ENCODE measurements at regions of chr6 and their contacts with region 1.

Region 1: GRCh38 chr6:27753668-27754407 is 158.4 kb downstream of the OR2B2 start:
- DNase-seq: peak; percentile 65
- H3K4me3 Mint-ChIP-seq: peak overlapping the region; percentile 83
- H3K27ac Mint-ChIP-seq: peak overlapping the region; percentile 69
- H3K4me1 Mint-ChIP-seq: peaks cover 56% of the 10 kb centered on the region
- H3K27me3 Mint-ChIP-seq: peaks cover 2% of the 10 kb centered on the region

Region 2: GRCh38 chr6:26322645-26323482 is 1431.0 kb before region 1 on chr6:
- intact Hi-C with region 1: loop called (anchors 5 kb)
- DNase-seq: peak; percentile 63
- H3K4me3 Mint-ChIP-seq: peak overlapping the region; percentile 89
- H3K27ac Mint-ChIP-seq: peak overlapping the region; percentile 51
- H3K4me1 Mint-ChIP-seq: peaks cover 51% of the 10 kb centered on the region
- H3K27me3 Mint-ChIP-seq: peaks cover 14% of the 10 kb centered on the region

Region 3: DNA sequence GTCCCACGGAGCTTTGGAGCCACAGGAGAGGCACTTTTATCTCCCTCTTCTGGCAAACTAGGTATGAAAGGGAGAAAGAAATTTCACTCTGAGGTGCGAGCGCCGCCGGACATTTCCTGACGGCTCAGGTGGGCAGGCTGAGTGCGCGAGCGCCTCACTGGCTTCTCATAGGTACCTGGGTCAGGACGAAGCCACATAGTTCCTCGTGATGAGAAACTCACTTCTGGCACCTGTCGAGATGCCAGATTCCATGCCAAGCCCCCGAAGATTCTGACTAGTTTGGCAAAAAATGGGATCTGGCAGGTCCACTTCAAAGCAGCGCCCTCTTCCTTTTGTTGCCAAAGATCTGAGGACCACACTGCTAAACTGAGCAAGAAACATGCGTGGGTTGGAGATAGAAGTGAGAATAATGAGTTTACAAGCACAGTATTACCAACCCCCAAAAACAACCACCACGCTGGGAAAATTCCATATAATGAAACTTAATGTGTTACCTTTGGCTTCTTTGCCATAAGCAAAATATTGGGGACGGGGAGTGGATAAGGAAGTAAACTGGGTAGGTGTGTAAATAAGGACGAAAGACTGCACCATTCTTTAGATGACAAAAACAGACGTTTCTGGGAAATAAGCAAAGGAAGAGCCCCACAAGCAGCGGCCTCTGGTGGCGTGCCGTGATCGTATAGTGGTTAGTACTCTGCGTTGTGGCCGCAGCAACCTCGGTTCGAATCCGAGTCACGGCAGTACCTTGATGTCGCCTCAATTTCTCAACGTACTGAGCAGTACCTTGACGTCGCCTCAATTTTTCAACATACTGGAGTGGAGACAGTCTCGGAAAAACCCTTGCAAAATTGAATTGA is 596.2 kb before region 1 on chr6:
- intact Hi-C with region 1: loop called (anchors 1 kb)
- DNase-seq: peak; percentile 70
- H3K4me3 Mint-ChIP-seq: peak overlapping the region; percentile 77
- H3K27ac Mint-ChIP-seq: peak overlapping the region; percentile 80
- H3K4me1 Mint-ChIP-seq: peaks cover 47% of the 10 kb centered on the region
- H3K27me3 Mint-ChIP-seq: peaks cover 2% of the 10 kb centered on the region

Region 4: DNA sequence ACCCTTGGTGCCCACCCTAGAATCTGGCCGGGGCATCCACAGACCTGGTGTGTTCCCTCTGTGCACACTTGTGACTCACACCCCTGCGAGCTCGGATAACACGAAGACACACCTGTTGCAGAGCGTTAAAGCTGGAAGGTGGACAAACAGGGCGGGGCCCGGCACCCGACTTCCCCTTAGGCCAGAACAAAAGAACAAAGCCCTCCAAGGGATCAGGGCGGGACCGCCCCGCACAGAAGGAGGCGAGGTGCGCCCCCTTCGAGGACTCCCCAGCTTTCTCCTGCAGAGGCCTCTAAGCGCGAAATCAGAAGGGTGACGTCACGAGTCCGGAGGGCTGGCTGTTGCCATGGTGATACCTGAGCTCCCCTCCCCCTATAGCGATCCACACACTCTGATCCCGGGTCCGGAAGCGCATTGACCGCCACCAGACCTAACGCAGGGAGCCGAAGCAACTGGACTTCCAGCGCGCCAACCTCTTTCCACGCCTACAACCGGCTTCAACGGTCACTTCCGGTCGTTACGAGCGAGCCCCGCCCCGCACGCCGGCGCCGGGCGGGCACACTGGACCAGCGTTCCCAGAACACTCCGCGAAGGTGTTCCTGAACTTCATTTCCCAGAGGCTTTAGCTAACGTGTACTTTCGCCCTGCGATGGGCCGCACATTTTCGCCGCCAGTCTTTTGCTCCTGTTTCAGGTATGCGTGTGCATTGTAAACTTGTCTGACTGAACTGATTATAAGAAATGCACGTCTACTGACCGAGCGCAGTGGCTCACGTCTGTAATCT is 281.0 kb before region 1 on chr6 and contains the start of gene ZNF184:
- intact Hi-C with region 1: loop called (anchors 1 kb)
- DNase-seq: peak; percentile 85
- H3K4me3 Mint-ChIP-seq: peak within 1 kb of the TSS; percentile 89
- H3K27ac Mint-ChIP-seq: peak within 1 kb of the TSS; percentile 93
- H3K4me1 Mint-ChIP-seq: peaks cover 46% of the 10 kb centered on the region
- H3K27me3 Mint-ChIP-seq: no peaks in the 10 kb centered on the region
- total RNA-seq, gene ZNF184: 7.6 and 8.0 TPM in 2 replicates

Region 5: GRCh38 chr6:27528714-27529113 is 225.1 kb before region 1 on chr6:
- intact Hi-C with region 1: no loop called
- DNase-seq: no peak
- H3K4me3 Mint-ChIP-seq: no peak overlapping the region
- H3K27ac Mint-ChIP-seq: no peak overlapping the region
- H3K4me1 Mint-ChIP-seq: no peaks in the 10 kb centered on the region
- H3K27me3 Mint-ChIP-seq: peaks cover 14% of the 10 kb centered on the region

Region 6: GRCh38 chr6:27687154-27688013 is 66.5 kb before region 1 on chr6:
- intact Hi-C with region 1: loop called (anchors 1 kb)
- DNase-seq: peak; percentile 74
- H3K4me3 Mint-ChIP-seq: peak overlapping the region; percentile 88
- H3K27ac Mint-ChIP-seq: peak overlapping the region; percentile 91
- H3K4me1 Mint-ChIP-seq: peaks cover 26% of the 10 kb centered on the region
- H3K27me3 Mint-ChIP-seq: peaks cover 24% of the 10 kb centered on the region

Region 7: DNA sequence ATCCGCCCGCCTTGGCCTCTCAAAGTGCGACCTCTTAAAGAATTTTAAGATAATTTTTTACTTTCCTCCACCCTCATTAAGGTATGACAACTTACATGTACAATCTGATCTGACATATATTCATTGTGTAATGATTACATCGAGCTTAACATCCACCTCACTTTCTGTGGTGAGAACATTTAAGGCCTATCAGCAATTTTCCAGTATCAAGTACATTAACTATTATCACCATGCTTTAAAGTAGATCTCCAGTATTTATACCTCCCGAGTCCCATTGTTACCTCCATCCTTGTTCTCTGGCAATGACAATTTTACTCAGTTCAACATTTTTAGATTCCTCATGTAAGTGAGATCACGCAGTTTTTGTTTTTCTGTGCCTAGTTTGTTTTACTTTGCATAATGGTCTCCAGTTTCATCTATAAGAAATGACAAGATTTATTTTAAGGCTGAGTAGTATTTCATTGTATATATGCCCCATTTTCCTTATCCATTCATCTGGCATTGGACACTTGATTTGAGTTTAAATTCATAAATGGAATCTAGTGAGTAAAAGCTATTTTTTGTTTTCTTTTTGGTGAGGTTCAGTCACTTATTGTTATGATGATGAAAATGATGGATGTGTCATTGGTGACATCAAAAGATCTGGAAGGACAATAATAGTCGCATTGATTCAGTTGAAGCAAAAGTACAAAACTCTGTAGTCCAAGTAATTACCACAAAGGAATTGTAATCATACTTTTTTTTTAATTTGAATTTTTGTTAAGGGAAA is 71.4 kb after region 1 on chr6:
- intact Hi-C with region 1: no loop called
- DNase-seq: no peak
- H3K4me3 Mint-ChIP-seq: peak overlapping the region; percentile 89
- H3K27ac Mint-ChIP-seq: peak overlapping the region; percentile 96
- H3K4me1 Mint-ChIP-seq: peaks cover 46% of the 10 kb centered on the region
- H3K27me3 Mint-ChIP-seq: peaks cover 3% of the 10 kb centered on the region

Region 8: GRCh38 chr6:27838058-27838944 is 84.5 kb after region 1 on chr6:
- intact Hi-C with region 1: loop called (anchors 1 kb)
- DNase-seq: peak; percentile 83
- H3K4me3 Mint-ChIP-seq: no peak overlapping the region
- H3K27ac Mint-ChIP-seq: no peak overlapping the region
- H3K4me1 Mint-ChIP-seq: peaks cover 25% of the 10 kb centered on the region
- H3K27me3 Mint-ChIP-seq: no peaks in the 10 kb centered on the region